CD8-positive, alpha-beta T cell (primary cell): ENCODE measurements at regions of chr2 and their contacts with region 1.

Region 1: GRCh38 chr2:71545572-71546274 is 92.4 kb downstream of the DYSF start:
- DNase-seq: peak in 7 of 9 experiments; percentile 21 to 73 (median 45)
- ATAC-seq: no peak
- H3K4me3 ChIP-seq: peak overlapping the region; percentile 31 to 33
- H3K4me3 Mint-ChIP-seq: peak overlapping the region; percentile 74
- H3K27ac ChIP-seq: no peak overlapping the region
- H3K27ac Mint-ChIP-seq: no peak overlapping the region
- H3K4me1 ChIP-seq: no peaks in the 10 kb centered on the region
- H3K4me1 Mint-ChIP-seq: peaks cover 10% of the 10 kb centered on the region
- H3K27me3 ChIP-seq: no peaks in the 10 kb centered on the region
- H3K27me3 Mint-ChIP-seq: peaks cover 11% of the 10 kb centered on the region
- CTCF ChIP-seq: peak; percentile 61

Region 2: DNA sequence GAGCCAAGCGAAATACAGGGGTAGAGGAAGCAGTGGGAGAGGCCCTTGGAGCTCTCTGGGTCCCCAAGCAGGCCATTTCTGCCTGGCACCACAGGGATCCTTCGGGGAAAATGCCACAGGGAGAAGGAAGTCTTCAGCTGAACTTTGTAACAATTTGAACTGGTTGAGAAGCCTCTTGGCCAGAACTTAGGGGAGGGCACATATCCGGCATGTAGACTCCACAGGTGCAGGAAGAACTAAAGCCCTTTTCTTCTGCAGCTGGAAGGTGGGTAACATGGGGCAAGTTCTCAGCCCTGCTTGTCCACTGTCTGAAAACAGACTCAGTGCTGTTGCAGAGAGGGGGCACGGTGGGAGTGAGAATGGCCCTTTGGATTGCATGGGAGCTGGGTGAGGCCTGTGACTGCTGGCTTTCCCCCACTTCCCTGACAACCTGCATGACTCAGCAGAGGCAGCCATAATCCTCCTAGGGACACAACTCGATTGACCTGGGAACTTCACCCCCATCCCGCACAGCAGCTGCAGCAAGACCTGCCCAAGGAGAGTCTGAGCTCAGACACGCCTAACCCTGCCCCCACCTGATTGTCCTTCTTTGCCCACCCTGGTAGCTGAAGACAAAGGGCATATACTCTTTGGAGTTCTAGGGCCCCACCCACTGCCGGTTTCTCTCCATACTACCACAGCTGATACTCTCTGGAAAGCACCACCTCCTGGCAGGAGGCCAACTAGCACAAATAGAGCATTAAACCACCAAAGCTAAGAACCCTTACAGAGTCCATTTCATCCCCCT is 1142.3 kb before region 1 on chr2:
- CTCF ChIA-PET with region 1: no interaction called
- POLR2A ChIA-PET with region 1: no interaction called
- intact Hi-C with region 1: no loop called
- DNase-seq: no peak
- ATAC-seq: no peak
- H3K4me3 ChIP-seq: no peak overlapping the region
- H3K4me3 Mint-ChIP-seq: no peak overlapping the region
- H3K27ac ChIP-seq: no peak overlapping the region
- H3K27ac Mint-ChIP-seq: no peak overlapping the region
- H3K4me1 ChIP-seq: no peaks in the 10 kb centered on the region
- H3K4me1 Mint-ChIP-seq: no peaks in the 10 kb centered on the region
- H3K27me3 ChIP-seq: no peaks in the 10 kb centered on the region
- H3K27me3 Mint-ChIP-seq: peaks cover 7% of the 10 kb centered on the region
- CTCF ChIP-seq: no peak

Region 3: GRCh38 chr2:71379088-71379487 is 166.6 kb before region 1 on chr2:
- CTCF ChIA-PET with region 1: no interaction called
- POLR2A ChIA-PET with region 1: no interaction called
- intact Hi-C with region 1: no loop called
- DNase-seq: no peak
- ATAC-seq: no peak
- H3K4me3 ChIP-seq: no peak overlapping the region
- H3K4me3 Mint-ChIP-seq: no peak overlapping the region
- H3K27ac ChIP-seq: no peak overlapping the region
- H3K27ac Mint-ChIP-seq: peak overlapping the region; percentile 29
- H3K4me1 ChIP-seq: no peaks in the 10 kb centered on the region
- H3K4me1 Mint-ChIP-seq: peaks cover 18% of the 10 kb centered on the region
- H3K27me3 ChIP-seq: no peaks in the 10 kb centered on the region
- H3K27me3 Mint-ChIP-seq: no peaks in the 10 kb centered on the region
- CTCF ChIP-seq: no peak

Region 4: DNA sequence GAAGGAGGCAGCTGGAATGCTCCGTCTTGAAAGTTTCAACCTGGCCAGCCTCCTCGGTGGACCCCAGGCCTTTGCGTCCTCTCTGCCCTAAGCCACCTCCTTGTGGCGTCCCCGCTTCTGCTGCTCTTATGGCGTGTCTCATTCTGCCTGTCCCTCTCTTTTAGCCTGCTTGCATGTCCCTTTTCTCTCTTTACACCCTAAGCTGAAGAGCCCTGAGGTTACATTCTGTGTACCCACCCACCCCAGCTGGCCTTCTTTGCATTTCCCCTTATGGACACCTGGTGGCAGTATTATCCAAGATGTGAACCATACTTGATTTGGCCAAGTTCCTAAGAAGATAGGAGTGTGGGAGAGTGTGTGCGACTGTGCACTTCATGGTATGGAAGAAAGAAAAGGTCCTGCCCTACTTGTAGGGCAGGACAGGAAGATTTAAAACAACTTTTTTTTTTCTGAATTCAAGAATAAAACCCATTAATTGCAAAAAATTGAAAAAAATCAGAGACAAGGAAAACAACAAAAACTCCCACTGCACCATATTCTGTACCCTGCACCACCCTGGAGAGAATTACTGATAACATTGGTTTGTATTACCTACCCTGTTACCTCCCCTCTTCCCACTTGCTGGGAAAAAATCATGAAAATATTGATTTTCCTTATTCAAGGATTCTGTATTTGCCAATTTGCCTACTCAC is 14.9 kb before region 1 on chr2:
- CTCF ChIA-PET with region 1: interaction called, 10 read pairs
- POLR2A ChIA-PET with region 1: no interaction called
- intact Hi-C with region 1: no loop called
- DNase-seq: peak in 2 of 9 experiments; percentile 31 to 47
- ATAC-seq: no peak
- H3K4me3 ChIP-seq: no peak overlapping the region
- H3K4me3 Mint-ChIP-seq: no peak overlapping the region
- H3K27ac ChIP-seq: no peak overlapping the region
- H3K27ac Mint-ChIP-seq: no peak overlapping the region
- H3K4me1 ChIP-seq: no peaks in the 10 kb centered on the region
- H3K4me1 Mint-ChIP-seq: no peaks in the 10 kb centered on the region
- H3K27me3 ChIP-seq: no peaks in the 10 kb centered on the region
- H3K27me3 Mint-ChIP-seq: peaks cover 26% of the 10 kb centered on the region
- CTCF ChIP-seq: peak; percentile 51

Region 5: GRCh38 chr2:71798266-71799012 is 252.7 kb after region 1 on chr2:
- CTCF ChIA-PET with region 1: interaction called, 4 read pairs
- POLR2A ChIA-PET with region 1: no interaction called
- intact Hi-C with region 1: loop called in 1 of 2 experiments (anchors 5 kb)
- DNase-seq: peak in 2 of 9 experiments; percentile 8 to 26
- ATAC-seq: no peak
- H3K4me3 ChIP-seq: no peak overlapping the region
- H3K4me3 Mint-ChIP-seq: no peak overlapping the region
- H3K27ac ChIP-seq: no peak overlapping the region
- H3K27ac Mint-ChIP-seq: no peak overlapping the region
- H3K4me1 ChIP-seq: no peaks in the 10 kb centered on the region
- H3K4me1 Mint-ChIP-seq: no peaks in the 10 kb centered on the region
- H3K27me3 ChIP-seq: no peaks in the 10 kb centered on the region
- H3K27me3 Mint-ChIP-seq: peaks cover 5% of the 10 kb centered on the region
- CTCF ChIP-seq: no peak

Region 6: DNA sequence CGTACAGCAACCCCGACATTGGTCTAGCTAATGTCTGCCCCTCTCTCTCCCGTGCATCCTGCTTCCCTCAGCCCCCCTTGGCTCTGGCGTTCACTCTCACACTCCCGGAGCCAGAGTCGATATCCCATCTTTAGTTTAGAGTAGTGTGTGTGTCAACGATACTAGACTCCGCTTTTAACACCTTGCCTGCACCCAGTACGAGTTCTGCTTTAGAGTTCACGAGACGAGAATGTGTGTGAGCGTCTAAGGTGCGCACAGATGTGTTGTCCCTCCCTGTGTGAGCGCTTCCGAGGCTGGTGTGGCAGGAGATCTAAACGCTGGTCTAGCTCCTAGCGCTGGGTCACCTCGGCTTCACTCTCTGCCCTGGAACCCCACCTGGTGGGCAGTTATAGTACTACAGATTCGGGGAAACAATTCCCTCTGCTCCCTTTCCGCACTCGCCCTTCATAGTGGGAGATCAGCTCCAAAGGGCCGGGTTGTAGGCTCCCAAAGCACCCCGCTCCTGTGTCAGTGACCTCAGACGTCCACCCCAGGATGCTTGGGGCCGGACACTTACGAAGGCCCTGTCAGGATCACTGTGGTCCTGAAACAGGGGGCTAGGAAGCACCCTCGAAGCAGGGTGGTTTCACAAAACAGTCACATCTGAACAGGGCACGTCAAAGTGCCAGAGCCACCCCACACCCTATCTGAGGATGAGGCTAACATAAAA is 604.6 kb after region 1 on chr2:
- CTCF ChIA-PET with region 1: interaction called, 17 read pairs
- POLR2A ChIA-PET with region 1: no interaction called
- intact Hi-C with region 1: loop called (anchors 1 kb)
- DNase-seq: peak; percentile 20 to 73 (median 58)
- ATAC-seq: peak; percentile 70
- H3K4me3 ChIP-seq: peak overlapping the region; percentile 31 to 51
- H3K4me3 Mint-ChIP-seq: peak overlapping the region; percentile 79
- H3K27ac ChIP-seq: no peak overlapping the region
- H3K27ac Mint-ChIP-seq: no peak overlapping the region
- H3K4me1 ChIP-seq: peaks cover 39% of the 10 kb centered on the region
- H3K4me1 Mint-ChIP-seq: peaks cover 35% of the 10 kb centered on the region
- H3K27me3 ChIP-seq: peaks cover 31 to 39% of the 10 kb centered on the region in 2 experiments
- H3K27me3 Mint-ChIP-seq: peaks cover 64% of the 10 kb centered on the region
- CTCF ChIP-seq: peak; percentile 74

Region 7: DNA sequence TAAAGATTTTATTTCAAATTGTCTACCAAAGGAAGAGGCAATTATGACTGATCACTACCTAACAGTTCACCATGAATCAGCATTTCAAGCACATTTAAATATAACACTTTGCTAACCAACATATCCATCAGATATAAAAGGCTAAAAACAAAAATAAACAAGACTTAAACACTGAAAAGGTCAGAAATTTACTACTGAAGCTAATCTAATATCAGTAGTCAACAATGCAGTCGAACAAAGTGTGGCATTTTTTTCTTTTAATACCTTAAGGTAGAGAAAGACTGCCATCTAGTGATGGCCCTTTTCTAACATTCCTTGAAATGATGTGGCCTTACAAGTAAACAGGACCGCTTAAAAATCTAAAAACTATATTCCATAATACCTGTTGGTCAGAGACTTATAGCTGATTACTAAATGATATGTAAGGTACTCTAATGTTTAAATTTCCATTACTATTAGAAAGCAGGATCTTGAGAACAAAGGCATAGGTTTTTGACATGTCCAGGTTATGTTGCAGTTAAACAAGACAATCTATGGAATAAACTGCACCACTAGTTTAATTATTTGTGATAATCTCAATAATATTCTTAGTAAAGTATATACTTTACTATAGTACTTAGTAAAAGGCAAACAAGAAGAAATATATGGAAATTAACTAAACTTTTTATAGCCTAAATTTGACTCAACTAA is 1200.1 kb after region 1 on chr2:
- CTCF ChIA-PET with region 1: interaction called, 7 read pairs
- POLR2A ChIA-PET with region 1: no interaction called
- intact Hi-C with region 1: loop called (anchors 1 to 2 kb)
- DNase-seq: peak in 2 of 9 experiments; percentile 45 to 55
- ATAC-seq: no peak
- H3K4me3 ChIP-seq: no peak overlapping the region
- H3K4me3 Mint-ChIP-seq: no peak overlapping the region
- H3K27ac ChIP-seq: no peak overlapping the region
- H3K27ac Mint-ChIP-seq: no peak overlapping the region
- H3K4me1 ChIP-seq: no peaks in the 10 kb centered on the region
- H3K4me1 Mint-ChIP-seq: no peaks in the 10 kb centered on the region
- H3K27me3 ChIP-seq: no peaks in the 10 kb centered on the region
- H3K27me3 Mint-ChIP-seq: no peaks in the 10 kb centered on the region
- CTCF ChIP-seq: peak; percentile 59

Region 8: DNA sequence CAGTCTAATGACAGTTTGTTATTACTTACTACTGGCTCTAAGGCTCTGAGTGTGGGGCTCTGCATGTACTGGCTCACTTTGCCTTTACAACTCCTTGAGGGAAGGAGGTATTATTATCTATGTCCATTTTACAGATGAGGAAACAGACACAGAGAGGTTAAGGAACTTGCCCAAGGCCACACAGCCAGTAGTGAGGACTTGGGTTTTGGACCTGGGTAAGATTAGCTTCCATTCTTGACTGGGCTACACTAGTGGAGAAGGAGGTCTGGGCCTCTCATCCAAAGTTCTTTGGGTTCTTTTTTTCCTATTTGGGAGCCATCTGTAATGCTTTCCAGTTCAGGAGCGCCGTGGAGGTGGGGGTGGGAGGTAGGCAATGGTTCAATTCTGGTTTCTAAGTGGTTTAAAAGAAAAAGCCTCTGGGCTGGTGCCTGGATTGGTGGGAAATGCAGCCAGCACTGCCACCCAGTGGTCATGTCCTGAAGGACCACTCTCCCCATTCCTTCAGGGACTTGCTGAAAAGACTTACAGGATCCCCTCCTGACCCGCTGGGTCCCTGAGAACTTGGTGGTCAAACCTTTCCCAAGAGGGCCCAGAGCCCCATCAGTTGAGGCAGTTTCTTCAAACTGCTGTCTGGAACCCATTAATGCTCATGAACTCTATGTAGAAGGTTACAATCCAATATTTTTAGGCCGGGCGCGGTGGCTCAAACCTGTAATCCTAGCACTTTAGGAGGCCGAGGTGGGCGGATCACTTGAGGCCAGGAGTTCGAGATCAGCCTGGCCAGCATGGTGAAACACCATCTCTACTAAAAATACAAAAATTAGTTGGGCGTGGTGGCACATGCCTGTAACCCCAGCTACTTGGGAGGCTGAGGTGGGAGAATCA is 1618.0 kb after region 1 on chr2:
- CTCF ChIA-PET with region 1: no interaction called
- POLR2A ChIA-PET with region 1: no interaction called
- intact Hi-C with region 1: loop called in 1 of 2 experiments (anchors 10 kb)
- DNase-seq: peak; percentile 31 to 77 (median 66)
- ATAC-seq: peak; percentile 86
- H3K4me3 ChIP-seq: no peak overlapping the region
- H3K4me3 Mint-ChIP-seq: no peak overlapping the region
- H3K27ac ChIP-seq: no peak overlapping the region
- H3K27ac Mint-ChIP-seq: no peak overlapping the region
- H3K4me1 ChIP-seq: no peaks in the 10 kb centered on the region
- H3K4me1 Mint-ChIP-seq: no peaks in the 10 kb centered on the region
- H3K27me3 ChIP-seq: no peaks in the 10 kb centered on the region
- H3K27me3 Mint-ChIP-seq: peaks cover 20% of the 10 kb centered on the region
- CTCF ChIP-seq: peak; percentile 78